OCI-LY7 (cell line): ENCODE measurements at regions of chr13 and their contacts with region 1.

Region 1: DNA sequence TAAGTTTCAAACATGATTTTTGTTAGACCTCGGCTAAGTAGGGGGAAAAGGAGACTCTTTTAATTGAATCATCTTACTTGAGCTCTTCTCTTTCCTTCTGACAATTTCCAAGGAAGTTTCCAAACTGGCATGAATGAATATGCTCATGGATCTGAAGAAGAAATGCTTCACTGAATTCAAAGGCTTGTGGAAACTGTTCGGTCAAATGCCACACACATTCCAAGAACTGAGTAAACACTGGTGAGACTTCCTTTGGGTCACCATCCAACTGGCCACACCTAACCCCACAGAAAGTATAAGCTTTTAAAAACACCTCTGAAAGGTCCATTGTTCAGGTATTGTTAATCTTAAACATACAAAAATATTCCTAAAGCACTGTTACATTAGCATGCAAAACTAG is 33.6 kb downstream of the MTMR6 start:
- DNase-seq: no peak
- H3K4me3 ChIP-seq: no peak overlapping the region
- H3K27ac ChIP-seq: no peak overlapping the region
- H3K4me1 ChIP-seq: peaks cover under 1% of the 10 kb centered on the region
- CTCF ChIP-seq: no peak

Region 2: DNA sequence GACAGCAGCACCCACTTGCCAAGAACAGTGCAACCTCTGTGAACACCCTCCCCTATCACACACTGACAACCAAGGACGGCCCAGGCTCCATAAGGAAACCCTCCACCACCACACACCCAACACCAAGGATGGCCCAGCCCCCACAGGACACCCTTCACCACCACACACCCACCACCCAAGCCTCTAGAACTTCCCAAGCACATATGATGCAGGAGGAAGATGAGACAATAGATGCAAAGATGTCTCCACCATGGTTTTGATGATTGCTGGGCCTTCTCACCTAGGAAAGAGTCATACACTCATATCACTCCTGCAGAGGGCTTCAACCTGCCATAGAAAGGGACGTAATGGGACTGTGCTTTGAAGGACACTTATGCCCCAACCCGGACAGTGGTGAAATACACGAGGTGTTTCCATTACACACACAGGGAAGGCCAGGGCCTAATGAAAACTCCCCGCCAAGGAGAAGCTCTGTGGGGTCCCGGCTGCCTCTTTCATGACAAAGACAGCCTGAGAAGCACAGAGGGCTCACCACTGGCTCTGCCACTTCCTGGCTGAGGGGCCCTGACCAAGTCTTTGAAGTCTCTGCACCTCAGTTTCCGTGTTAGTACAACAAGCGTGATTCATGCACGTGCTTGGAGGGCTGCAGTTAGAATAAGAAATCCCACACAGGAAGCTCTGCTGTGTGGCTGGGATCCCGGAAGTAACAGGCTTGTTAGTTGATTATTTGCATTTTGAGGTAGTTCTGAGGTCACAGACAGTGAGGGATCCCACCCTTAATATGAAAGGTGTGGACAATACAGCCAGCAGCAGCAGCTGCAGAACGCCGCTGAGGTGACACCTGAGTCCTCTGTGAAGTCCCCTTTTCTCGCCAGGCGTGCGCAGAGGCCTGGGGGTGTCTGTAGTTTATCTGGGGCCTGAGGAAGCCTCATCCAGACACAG is 635.4 kb before region 1 on chr13:
- CTCF ChIA-PET with region 1: no interaction called
- POLR2A ChIA-PET with region 1: no interaction called
- intact Hi-C with region 1: no loop called
- DNase-seq: peak; percentile 70
- H3K4me3 ChIP-seq: no peak overlapping the region
- H3K27ac ChIP-seq: peak overlapping the region; percentile 29
- H3K4me1 ChIP-seq: peaks cover 20% of the 10 kb centered on the region
- CTCF ChIP-seq: no peak

Region 3: DNA sequence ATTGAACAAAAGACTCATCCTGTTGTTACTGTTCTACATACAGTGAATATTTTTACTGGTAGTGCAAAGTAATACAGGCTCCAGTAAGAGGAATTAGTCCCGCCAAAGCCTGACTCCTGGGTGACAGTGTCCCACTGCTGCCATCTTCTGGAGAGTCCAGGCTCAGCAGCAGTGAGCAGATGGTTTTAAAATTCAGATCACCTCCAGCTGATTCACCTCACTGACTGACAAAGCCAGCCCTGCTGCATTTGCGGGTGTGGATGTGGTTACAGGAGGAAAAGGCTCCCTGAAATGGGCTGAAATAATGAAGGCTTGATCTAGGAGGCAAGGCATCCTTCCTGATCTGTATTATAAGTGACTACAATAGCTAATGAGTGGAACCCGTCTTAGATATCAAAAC is 139.5 kb before region 1 on chr13:
- CTCF ChIA-PET with region 1: no interaction called
- POLR2A ChIA-PET with region 1: no interaction called
- intact Hi-C with region 1: no loop called
- DNase-seq: peak; percentile 79
- H3K4me3 ChIP-seq: no peak overlapping the region
- H3K27ac ChIP-seq: no peak overlapping the region
- H3K4me1 ChIP-seq: peaks cover 27% of the 10 kb centered on the region
- CTCF ChIP-seq: peak; percentile 94

Region 4: DNA sequence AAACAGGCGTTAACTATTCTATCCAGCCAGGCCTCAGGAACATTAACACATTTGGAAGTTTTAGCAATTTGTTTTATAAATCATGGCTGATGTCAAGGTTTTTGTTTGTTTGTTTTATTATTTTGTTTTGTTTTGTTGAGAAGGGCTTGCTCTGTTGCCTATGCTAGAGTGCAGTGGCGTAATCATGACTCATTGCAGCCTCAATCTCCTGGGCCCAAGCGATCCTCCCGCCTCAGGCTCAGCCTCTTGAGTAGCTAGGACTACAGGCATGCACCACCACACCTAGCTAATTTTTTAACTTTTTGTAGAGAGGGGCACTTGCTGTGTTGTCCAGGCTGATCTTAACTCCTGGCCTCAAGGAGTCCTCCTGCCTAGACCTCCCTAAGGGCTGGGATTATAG is 76.0 kb after region 1 on chr13:
- CTCF ChIA-PET with region 1: no interaction called
- POLR2A ChIA-PET with region 1: interaction called, 3 read pairs
- intact Hi-C with region 1: loop called (anchors 5 kb)
- DNase-seq: no peak
- H3K4me3 ChIP-seq: no peak overlapping the region
- H3K27ac ChIP-seq: no peak overlapping the region
- H3K4me1 ChIP-seq: no peaks in the 10 kb centered on the region
- CTCF ChIP-seq: no peak

Region 5: GRCh38 chr13:26412263-26412662 is 1158.6 kb after region 1 on chr13:
- CTCF ChIA-PET with region 1: no interaction called
- POLR2A ChIA-PET with region 1: no interaction called
- intact Hi-C with region 1: no loop called
- DNase-seq: no peak
- H3K4me3 ChIP-seq: no peak overlapping the region
- H3K27ac ChIP-seq: no peak overlapping the region
- H3K4me1 ChIP-seq: no peaks in the 10 kb centered on the region
- CTCF ChIP-seq: no peak